Natural killer cell (primary cell): ENCODE measurements at regions of chr3 and their contacts with region 1.

Region 1: GRCh38 chr3:98199020-98199419 is 32.5 kb downstream of the OR5H15 start:
- DNase-seq: no peak
- ATAC-seq: no peak
- H3K4me3 ChIP-seq: no peak overlapping the region
- H3K4me3 Mint-ChIP-seq: no peak overlapping the region
- H3K27ac ChIP-seq: no peak overlapping the region
- H3K27ac Mint-ChIP-seq: no peak overlapping the region
- H3K4me1 ChIP-seq: no peaks in the 10 kb centered on the region
- H3K4me1 Mint-ChIP-seq: no peaks in the 10 kb centered on the region
- H3K27me3 ChIP-seq: no peaks in the 10 kb centered on the region
- H3K27me3 Mint-ChIP-seq: no peaks in the 10 kb centered on the region
- CTCF ChIP-seq: no peak

Region 2: DNA sequence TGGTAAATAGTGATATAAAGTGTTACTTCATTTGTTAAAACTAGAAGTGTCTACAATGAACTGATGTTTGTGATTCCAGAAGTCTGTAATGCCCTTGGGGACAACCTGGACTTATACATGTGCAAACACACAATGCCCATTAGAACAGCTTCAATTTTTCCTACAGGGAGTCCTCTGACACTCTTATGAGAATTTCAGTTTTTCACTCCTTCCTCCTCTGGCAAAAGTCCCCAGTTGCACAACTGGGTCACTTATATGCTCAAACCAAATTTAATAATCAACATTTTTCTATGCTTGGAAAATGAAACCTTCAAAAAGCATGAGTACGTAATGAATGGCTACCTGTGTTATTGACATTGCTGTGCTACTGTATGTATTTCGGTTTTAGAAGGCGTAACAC is 32.6 kb before region 1 on chr3 and contains the start of gene OR5H15:
- intact Hi-C with region 1: loop called (anchors 1 kb)
- DNase-seq: no peak
- ATAC-seq: no peak
- H3K4me3 ChIP-seq: no peak within 1 kb of the TSS
- H3K4me3 Mint-ChIP-seq: no peak within 1 kb of the TSS
- H3K27ac ChIP-seq: no peak within 1 kb of the TSS
- H3K27ac Mint-ChIP-seq: no peak within 1 kb of the TSS
- H3K4me1 ChIP-seq: no peaks in the 10 kb centered on the region
- H3K4me1 Mint-ChIP-seq: no peaks in the 10 kb centered on the region
- H3K27me3 ChIP-seq: no peaks in the 10 kb centered on the region
- H3K27me3 Mint-ChIP-seq: no peaks in the 10 kb centered on the region
- CTCF ChIP-seq: no peak
- total RNA-seq, gene OR5H15: not detected